Gastrocnemius medialis (tissue), 4 donors: ENCODE measurements at regions of chr3 and their contacts with region 1.

Region 1: DNA sequence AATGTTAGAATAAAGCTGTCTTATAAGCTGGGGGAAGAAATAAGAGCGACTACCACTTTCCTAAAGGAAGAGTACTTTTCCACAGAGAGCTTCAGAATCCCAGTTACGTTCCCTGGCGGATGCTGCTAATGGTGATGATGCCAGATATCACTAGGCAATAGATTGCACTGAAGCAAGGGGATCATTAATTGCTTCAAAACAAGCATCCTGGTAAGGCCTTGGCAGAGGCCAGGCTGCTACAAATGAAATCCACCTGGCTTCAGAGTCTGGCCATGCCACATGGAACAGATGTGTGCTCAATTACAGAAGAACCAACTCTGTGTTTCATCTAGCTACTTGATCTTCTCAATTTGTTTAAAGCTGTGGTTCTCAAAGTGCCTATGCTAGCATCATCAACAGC is 129.2 kb upstream of the IL12A start:
- DNase-seq: no peak
- ATAC-seq: no peak
- H3K4me3 ChIP-seq: peak overlapping the region in 1 of 4 donors; percentile 10
- H3K27ac ChIP-seq: peak overlapping the region; percentile 86 to 97 (median 92)
- H3K4me1 ChIP-seq: peaks cover 94% of the 10 kb centered on the region in 2 donors
- H3K27me3 ChIP-seq: no peaks in the 10 kb centered on the region
- CTCF ChIP-seq: no peak
- POLR2A ChIP-seq: no peak

Region 2: DNA sequence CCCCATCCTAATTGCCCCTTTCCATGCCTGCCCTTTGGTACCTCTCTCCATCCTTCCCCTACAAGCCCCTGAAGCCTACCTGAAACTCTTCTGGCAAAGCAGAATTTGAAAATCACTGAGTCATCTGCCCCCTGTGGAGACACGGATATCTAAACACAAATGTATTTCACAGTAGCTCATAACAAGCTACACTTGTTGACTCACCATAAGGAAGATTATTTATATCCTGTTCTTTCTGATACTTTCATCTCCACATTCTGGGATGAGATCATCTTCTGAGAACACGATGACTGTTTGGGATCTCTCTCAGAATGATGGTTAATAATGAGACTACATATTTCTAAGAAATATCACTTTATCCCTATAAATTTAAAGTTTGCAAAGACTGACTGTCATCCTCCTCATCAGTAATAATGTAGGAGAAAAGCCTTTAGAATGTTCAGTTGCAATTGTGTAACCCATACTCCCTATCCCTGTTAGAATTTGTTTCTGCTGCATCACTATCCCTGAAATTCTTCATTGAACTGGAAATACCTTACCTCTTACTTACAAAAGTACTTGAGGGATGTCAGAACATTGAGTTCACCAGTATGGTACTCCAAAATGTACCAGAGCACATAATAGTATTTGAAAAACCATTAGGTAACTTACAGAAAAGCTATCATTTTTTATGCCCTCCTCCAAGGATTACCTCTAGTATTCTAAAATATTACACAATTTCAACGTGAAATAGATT is 13.1 kb after region 1 on chr3:
- in situ Hi-C with region 1: no loop called
- intact Hi-C with region 1: loop called (anchors 2 kb)
- DNase-seq: peak in 1 of 2 donors; percentile 25
- ATAC-seq: peak; percentile 94 to 97
- H3K4me3 ChIP-seq: no peak overlapping the region
- H3K27ac ChIP-seq: peak overlapping the region; percentile 82 to 97 (median 84)
- H3K4me1 ChIP-seq: peaks cover 55% of the 10 kb centered on the region in 2 donors
- H3K27me3 ChIP-seq: no peaks in the 10 kb centered on the region
- CTCF ChIP-seq: peak in 4 of 5 experiments; percentile 26 to 37 (median 30)
- POLR2A ChIP-seq: peak in 1 of 2 donors; percentile 41